Activated CD4-positive, alpha-beta T cell treated with anti-CD3 and anti-CD28 coated beads for 36 hours (primary cell): ENCODE measurements at regions of chr13 and their contacts with region 1.

Region 1: DNA sequence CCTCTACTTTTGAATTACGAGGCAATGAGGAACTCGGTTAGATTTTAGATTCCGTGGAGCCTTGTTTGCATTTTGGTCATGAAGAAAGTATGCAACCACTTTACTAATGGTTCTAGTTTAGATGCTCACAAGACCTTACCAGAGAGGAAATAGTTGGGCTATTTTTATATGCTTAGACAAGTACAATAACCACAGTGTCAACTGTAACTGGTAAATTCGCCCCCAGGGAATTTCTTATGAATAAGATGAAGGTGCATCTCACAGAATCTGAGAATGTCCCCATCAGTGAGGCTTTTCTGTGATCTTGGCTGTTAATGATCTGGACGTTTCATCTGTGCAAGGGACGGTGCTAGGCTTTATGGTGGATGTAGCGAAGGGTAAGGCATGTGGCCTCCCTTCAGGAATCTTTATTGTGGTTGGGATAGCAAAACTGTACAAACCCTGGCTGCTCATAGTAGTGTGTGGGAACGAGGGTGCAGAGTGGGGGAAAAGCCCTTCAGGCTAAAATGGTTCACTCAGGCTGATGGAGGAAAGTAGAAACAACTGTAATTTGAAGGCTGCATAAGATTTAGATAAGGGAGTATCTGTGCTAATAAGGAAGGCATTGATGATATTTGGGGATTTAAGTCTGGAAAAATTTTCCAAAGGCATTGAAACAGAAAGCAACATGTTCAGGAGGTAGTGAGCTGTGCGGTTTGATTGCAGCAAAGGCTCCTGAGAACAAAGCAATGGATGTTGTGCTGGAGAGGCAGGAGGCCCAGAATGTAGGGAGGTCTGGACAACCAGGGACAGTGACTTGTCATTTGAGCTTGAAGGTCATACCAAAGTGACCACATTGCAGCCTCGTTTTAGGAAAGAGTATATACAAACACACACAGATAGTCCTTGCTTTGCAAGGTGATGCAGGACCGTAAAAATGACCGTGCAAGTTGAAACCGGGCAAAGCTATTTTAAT is 28.4 kb downstream of the UBAC2 start:
- DNase-seq: no peak
- ATAC-seq: peak; percentile 67
- H3K4me3 Mint-ChIP-seq: peak overlapping the region; percentile 51
- H3K27ac Mint-ChIP-seq: peak overlapping the region; percentile 89
- H3K4me1 Mint-ChIP-seq: peaks cover 81% of the 10 kb centered on the region
- H3K27me3 Mint-ChIP-seq: no peaks in the 10 kb centered on the region

Region 2: DNA sequence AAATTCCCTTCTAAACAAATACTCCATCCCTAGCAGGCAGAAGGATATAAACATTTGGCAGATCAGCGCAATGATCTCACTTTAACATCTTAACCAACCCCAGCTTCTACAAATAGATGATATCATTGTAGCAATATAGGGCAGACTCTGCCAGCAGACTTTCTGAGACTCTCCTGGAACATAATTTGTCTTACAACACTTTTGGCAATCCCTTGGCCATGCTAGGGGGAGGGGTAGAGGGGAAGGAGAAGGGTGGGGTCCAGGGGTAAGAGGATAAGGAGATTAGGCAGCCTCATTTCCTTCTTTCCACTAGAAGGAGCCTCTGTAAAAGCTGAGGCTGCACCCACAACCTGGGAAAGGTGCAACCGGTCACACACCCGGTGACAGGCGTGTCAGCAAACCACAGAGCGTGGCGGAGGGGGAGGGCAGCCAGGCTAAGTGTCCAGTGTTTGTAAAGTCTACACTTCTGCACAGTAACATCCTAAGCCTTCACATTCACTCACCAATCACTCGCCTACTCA is 37.1 kb before region 1 on chr13:
- CTCF ChIA-PET with region 1: no interaction called
- POLR2A ChIA-PET with region 1: no interaction called
- intact Hi-C with region 1: no loop called
- DNase-seq: no peak
- ATAC-seq: no peak
- H3K4me3 Mint-ChIP-seq: no peak overlapping the region
- H3K27ac Mint-ChIP-seq: no peak overlapping the region
- H3K4me1 Mint-ChIP-seq: peaks cover 10% of the 10 kb centered on the region
- H3K27me3 Mint-ChIP-seq: no peaks in the 10 kb centered on the region

Region 3: GRCh38 chr13:99214232-99214631 is 14.8 kb before region 1 on chr13:
- CTCF ChIA-PET with region 1: interaction called, 3 read pairs
- POLR2A ChIA-PET with region 1: interaction called, 3 read pairs
- intact Hi-C with region 1: loop called in 1 of 2 experiments (anchors 1 kb)
- DNase-seq: peak; percentile 82
- ATAC-seq: peak; percentile 80
- H3K4me3 Mint-ChIP-seq: peak overlapping the region; percentile 74
- H3K27ac Mint-ChIP-seq: peak overlapping the region; percentile 87
- H3K4me1 Mint-ChIP-seq: peaks cover 79% of the 10 kb centered on the region
- H3K27me3 Mint-ChIP-seq: no peaks in the 10 kb centered on the region